IMR-90 (cell line): ENCODE measurements at regions of chr11 and their contacts with region 1.

Region 1: GRCh38 chr11:128021349-128022006 is 565.9 kb downstream of the ETS1 start:
- DNase-seq: no peak
- ATAC-seq: peak; percentile 43; the same call in 1 of the 2 replicates
- H3K4me3 ChIP-seq: no peak overlapping the region
- H3K27ac ChIP-seq: no peak overlapping the region
- H3K4me1 ChIP-seq: peaks cover 12% of the 10 kb centered on the region
- H3K27me3 ChIP-seq: no peaks in the 10 kb centered on the region
- CTCF ChIP-seq: peak; percentile 47
- POLR2A ChIP-seq: no peak
- RAD21 ChIP-seq: peak; percentile 55

Region 2: DNA sequence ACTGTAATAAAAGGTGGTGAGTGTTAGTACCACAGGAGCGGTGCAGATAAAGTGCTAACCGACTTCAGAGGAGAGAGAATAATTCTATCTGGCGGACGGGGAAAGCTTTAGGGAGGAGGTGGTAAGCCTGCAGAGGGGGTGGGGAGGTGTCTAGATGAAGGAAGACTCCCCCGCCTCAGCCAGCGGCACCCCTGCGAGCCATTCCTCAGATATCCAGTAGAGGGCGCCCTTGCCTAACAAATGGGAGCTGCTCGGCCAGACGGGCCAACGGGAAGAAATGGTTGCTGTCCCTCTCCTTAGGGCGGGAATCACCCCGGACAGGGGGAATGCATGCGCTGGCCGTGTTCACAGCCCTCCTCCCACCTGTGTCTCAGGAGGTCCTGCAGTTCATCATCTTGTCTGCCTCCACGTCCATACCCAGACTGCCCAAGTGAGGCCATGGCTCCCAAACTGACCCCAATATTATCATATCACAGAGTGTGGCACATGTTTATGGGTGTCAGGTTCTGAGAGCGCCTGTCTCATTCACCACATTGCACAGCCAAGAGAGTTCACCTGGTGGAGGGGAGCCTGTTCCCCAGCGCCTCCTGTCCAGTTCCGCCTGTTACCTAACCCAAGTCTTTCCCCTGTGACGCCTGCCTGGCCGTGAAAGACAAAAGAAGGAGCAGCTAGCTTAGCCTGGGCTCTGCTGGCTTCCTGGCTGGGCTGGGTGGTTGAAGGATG is 1580.5 kb before region 1 on chr11:
- CTCF ChIA-PET with region 1: no interaction called
- POLR2A ChIA-PET with region 1: no interaction called
- dilution Hi-C with region 1: no loop called
- in situ Hi-C with region 1: loop called (anchors 25 kb)
- intact Hi-C with region 1: loop called (anchors 5 kb)
- DNase-seq: peak; percentile 59
- ATAC-seq: peak; percentile 96
- H3K4me3 ChIP-seq: no peak overlapping the region
- H3K27ac ChIP-seq: no peak overlapping the region
- H3K4me1 ChIP-seq: no peaks in the 10 kb centered on the region
- H3K27me3 ChIP-seq: no peaks in the 10 kb centered on the region; the same call in 1 of the 2 replicates
- CTCF ChIP-seq: peak; percentile 96
- POLR2A ChIP-seq: no peak
- RAD21 ChIP-seq: peak; percentile 97

Region 3: GRCh38 chr11:127470306-127470884 is 551.1 kb before region 1 on chr11:
- CTCF ChIA-PET with region 1: no interaction called
- POLR2A ChIA-PET with region 1: no interaction called
- dilution Hi-C with region 1: no loop called
- in situ Hi-C with region 1: no loop called
- intact Hi-C with region 1: loop called (anchors 5 kb)
- DNase-seq: no peak
- ATAC-seq: no peak; the same call in 1 of the 2 replicates
- H3K4me3 ChIP-seq: no peak overlapping the region
- H3K27ac ChIP-seq: no peak overlapping the region
- H3K4me1 ChIP-seq: no peaks in the 10 kb centered on the region
- H3K27me3 ChIP-seq: no peaks in the 10 kb centered on the region
- CTCF ChIP-seq: peak; percentile 26; the same call in 1 of the 2 replicates
- POLR2A ChIP-seq: no peak
- RAD21 ChIP-seq: peak; percentile 37

Region 4: GRCh38 chr11:127843483-127844396 is 177.7 kb before region 1 on chr11:
- CTCF ChIA-PET with region 1: no interaction called
- POLR2A ChIA-PET with region 1: no interaction called
- dilution Hi-C with region 1: no loop called
- in situ Hi-C with region 1: no loop called
- intact Hi-C with region 1: loop called (anchors 1 kb)
- DNase-seq: peak; percentile 55
- ATAC-seq: peak; percentile 82
- H3K4me3 ChIP-seq: no peak overlapping the region
- H3K27ac ChIP-seq: no peak overlapping the region
- H3K4me1 ChIP-seq: no peaks in the 10 kb centered on the region
- H3K27me3 ChIP-seq: no peaks in the 10 kb centered on the region
- CTCF ChIP-seq: peak; percentile 58
- POLR2A ChIP-seq: no peak
- RAD21 ChIP-seq: peak; percentile 50

Region 5: GRCh38 chr11:127965947-127966668 is 55.4 kb before region 1 on chr11:
- CTCF ChIA-PET with region 1: no interaction called
- POLR2A ChIA-PET with region 1: no interaction called
- dilution Hi-C with region 1: no loop called
- in situ Hi-C with region 1: no loop called
- intact Hi-C with region 1: no loop called
- DNase-seq: peak; percentile 1
- ATAC-seq: no peak
- H3K4me3 ChIP-seq: no peak overlapping the region
- H3K27ac ChIP-seq: no peak overlapping the region
- H3K4me1 ChIP-seq: 0 out of 2 replicates have a peak, but pooled peaks cover 2% of the 10 kb centered on the region
- H3K27me3 ChIP-seq: no peaks in the 10 kb centered on the region; the same call in 1 of the 2 replicates
- CTCF ChIP-seq: no peak
- POLR2A ChIP-seq: no peak
- RAD21 ChIP-seq: no peak